ENCODE measurements at regions of chr14 and their contacts with region 1.

Region 1: GRCh38 chr14:99271951-99272631 is at the start of gene BCL11B:
- DNase-seq: peak; percentile 78 to 96 (median 88)
- ATAC-seq: peak; percentile 76
- H3K4me3 ChIP-seq: peak within 1 kb of the TSS; percentile 97
- H3K4me3 Mint-ChIP-seq: peak within 1 kb of the TSS; percentile 100
- H3K27ac ChIP-seq: peak within 1 kb of the TSS; percentile 18 to 79
- H3K27ac Mint-ChIP-seq: peak within 1 kb of the TSS; percentile 99
- H3K4me1 ChIP-seq: peaks cover 36% of the 10 kb centered on the region
- H3K4me1 Mint-ChIP-seq: peaks cover 48% of the 10 kb centered on the region
- H3K27me3 ChIP-seq: no peaks in the 10 kb centered on the region
- H3K27me3 Mint-ChIP-seq: peaks cover 5% of the 10 kb centered on the region
- CTCF ChIP-seq: peak; percentile 71
- total RNA-seq, gene BCL11B: 244 to 254 TPM

Region 2: DNA sequence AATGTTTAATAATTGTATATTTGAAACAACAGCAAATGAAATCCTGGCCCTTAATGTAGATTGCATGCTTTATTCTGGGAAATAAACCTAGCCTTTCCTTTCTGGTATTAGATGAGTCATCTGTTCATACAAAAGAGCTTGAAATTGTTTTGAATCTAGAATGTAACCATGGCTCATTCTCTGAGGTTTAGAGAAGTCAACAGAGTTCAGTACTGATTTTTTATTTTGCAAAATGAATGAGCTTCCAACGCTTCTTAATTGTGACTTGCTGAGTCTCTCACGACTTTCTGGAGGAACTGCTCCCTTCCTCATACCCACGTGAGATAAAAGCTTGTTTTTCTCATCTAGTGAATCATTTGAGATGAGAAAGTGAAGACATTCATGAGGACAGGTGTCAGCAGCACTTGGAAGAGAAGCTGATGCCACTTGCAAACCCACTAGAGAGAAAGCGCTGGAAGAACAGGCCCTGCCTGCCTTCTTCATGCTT is 1965.3 kb before region 1 on chr14:
- CTCF ChIA-PET with region 1: no interaction called
- POLR2A ChIA-PET with region 1: no interaction called
- intact Hi-C with region 1: loop called in 1 of 2 experiments (anchors 5 kb)
- DNase-seq: peak in 3 of 14 experiments; percentile 2 to 15 (median 15)
- ATAC-seq: no peak
- H3K4me3 ChIP-seq: no peak overlapping the region
- H3K4me3 Mint-ChIP-seq: no peak overlapping the region
- H3K27ac ChIP-seq: no peak overlapping the region
- H3K27ac Mint-ChIP-seq: no peak overlapping the region
- H3K4me1 ChIP-seq: peaks cover 10% of the 10 kb centered on the region
- H3K4me1 Mint-ChIP-seq: peaks cover 23% of the 10 kb centered on the region
- H3K27me3 ChIP-seq: no peaks in the 10 kb centered on the region
- H3K27me3 Mint-ChIP-seq: no peaks in the 10 kb centered on the region
- CTCF ChIP-seq: no peak

Region 3: GRCh38 chr14:97724265-97724731 is 1547.8 kb before region 1 on chr14:
- CTCF ChIA-PET with region 1: no interaction called
- POLR2A ChIA-PET with region 1: interaction called, 4 read pairs
- intact Hi-C with region 1: loop called in 1 of 2 experiments (anchors 2 kb)
- DNase-seq: peak in 13 of 14 experiments; percentile 9 to 76 (median 37)
- ATAC-seq: peak; percentile 80
- H3K4me3 ChIP-seq: peak overlapping the region; percentile 36
- H3K4me3 Mint-ChIP-seq: peak overlapping the region; percentile 85
- H3K27ac ChIP-seq: peak overlapping the region; percentile 75 to 80
- H3K27ac Mint-ChIP-seq: peak overlapping the region; percentile 94
- H3K4me1 ChIP-seq: peaks cover 54% of the 10 kb centered on the region
- H3K4me1 Mint-ChIP-seq: peaks cover 90% of the 10 kb centered on the region
- H3K27me3 ChIP-seq: no peaks in the 10 kb centered on the region
- H3K27me3 Mint-ChIP-seq: no peaks in the 10 kb centered on the region
- CTCF ChIP-seq: peak; percentile 20

Region 4: GRCh38 chr14:98182393-98183055 is 1089.6 kb before region 1 on chr14:
- CTCF ChIA-PET with region 1: interaction called, 4 read pairs
- POLR2A ChIA-PET with region 1: interaction called, 271 read pairs
- intact Hi-C with region 1: loop called in 1 of 2 experiments (anchors 5 kb)
- DNase-seq: peak in 2 of 14 experiments; percentile 57 to 58
- ATAC-seq: no peak
- H3K4me3 ChIP-seq: no peak overlapping the region
- H3K4me3 Mint-ChIP-seq: peak overlapping the region; percentile 75
- H3K27ac ChIP-seq: peak overlapping the region; percentile 69 to 87
- H3K27ac Mint-ChIP-seq: peak overlapping the region; percentile 93
- H3K4me1 ChIP-seq: peaks cover 86% of the 10 kb centered on the region
- H3K4me1 Mint-ChIP-seq: peaks cover 98% of the 10 kb centered on the region
- H3K27me3 ChIP-seq: no peaks in the 10 kb centered on the region
- H3K27me3 Mint-ChIP-seq: no peaks in the 10 kb centered on the region
- CTCF ChIP-seq: no peak

Region 5: GRCh38 chr14:98444077-98444476 is 828.0 kb before region 1 on chr14:
- CTCF ChIA-PET with region 1: interaction called, 4 read pairs
- POLR2A ChIA-PET with region 1: interaction called, 10 read pairs
- intact Hi-C with region 1: loop called in 1 of 2 experiments (anchors 5 kb)
- DNase-seq: peak; percentile 27 to 82 (median 48)
- ATAC-seq: peak; percentile 97
- H3K4me3 ChIP-seq: no peak overlapping the region
- H3K4me3 Mint-ChIP-seq: peak overlapping the region; percentile 79
- H3K27ac ChIP-seq: peak overlapping the region; percentile 75 to 81
- H3K27ac Mint-ChIP-seq: no peak overlapping the region
- H3K4me1 ChIP-seq: peaks cover 28% of the 10 kb centered on the region
- H3K4me1 Mint-ChIP-seq: peaks cover 57% of the 10 kb centered on the region
- H3K27me3 ChIP-seq: no peaks in the 10 kb centered on the region
- H3K27me3 Mint-ChIP-seq: no peaks in the 10 kb centered on the region
- CTCF ChIP-seq: no peak

Measured in CD4-positive, alpha-beta T cell (primary cell).